PC-9 (cell line): ENCODE measurements at regions of chr3 and their contacts with region 1.

Region 1: GRCh38 chr3:136196401-136197158 is 445 bp upstream of the MSL2 start:
- DNase-seq: peak; percentile 97 to 100
- H3K4me3 ChIP-seq: peak overlapping the region; percentile 84
- H3K27ac ChIP-seq: peak overlapping the region; percentile 95
- H3K4me1 ChIP-seq: peaks cover 30% of the 10 kb centered on the region
- H3K27me3 ChIP-seq: no peaks in the 10 kb centered on the region
- CTCF ChIP-seq: no peak

Region 2: GRCh38 chr3:135197246-135197645 is 999.3 kb before region 1 on chr3:
- CTCF ChIA-PET with region 1: no interaction called
- POLR2A ChIA-PET with region 1: no interaction called
- intact Hi-C with region 1: no loop called
- DNase-seq: no peak
- H3K4me3 ChIP-seq: no peak overlapping the region
- H3K27ac ChIP-seq: no peak overlapping the region
- H3K4me1 ChIP-seq: no peaks in the 10 kb centered on the region
- H3K27me3 ChIP-seq: no peaks in the 10 kb centered on the region
- CTCF ChIP-seq: no peak

Region 3: DNA sequence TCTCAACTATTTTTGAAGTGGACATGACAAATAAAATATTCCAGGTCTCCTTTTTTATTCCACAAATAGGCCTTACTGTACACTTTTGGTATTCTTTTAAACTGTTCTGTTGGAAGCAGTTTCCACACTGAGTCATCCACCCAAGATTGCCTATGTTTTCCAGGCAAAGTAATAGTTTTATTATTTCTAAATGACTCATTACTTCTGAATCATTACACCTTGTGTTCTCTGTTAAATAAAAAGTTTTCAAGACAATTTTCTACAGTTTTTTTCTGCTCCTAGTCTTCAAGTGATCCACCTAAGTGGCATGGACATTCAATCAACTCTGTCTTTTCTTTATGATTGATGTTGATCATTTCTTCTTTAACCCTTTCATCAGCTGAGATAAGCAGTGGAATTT is 204.5 kb before region 1 on chr3:
- CTCF ChIA-PET with region 1: no interaction called
- POLR2A ChIA-PET with region 1: no interaction called
- intact Hi-C with region 1: no loop called
- DNase-seq: peak in 1 of 2 experiments; percentile 57
- H3K4me3 ChIP-seq: no peak overlapping the region
- H3K27ac ChIP-seq: 0 out of 2 replicates have a peak overlapping the region, but pooled peaks have one; percentile 4
- H3K4me1 ChIP-seq: peaks cover 16% of the 10 kb centered on the region
- H3K27me3 ChIP-seq: no peaks in the 10 kb centered on the region
- CTCF ChIP-seq: no peak

Region 4: DNA sequence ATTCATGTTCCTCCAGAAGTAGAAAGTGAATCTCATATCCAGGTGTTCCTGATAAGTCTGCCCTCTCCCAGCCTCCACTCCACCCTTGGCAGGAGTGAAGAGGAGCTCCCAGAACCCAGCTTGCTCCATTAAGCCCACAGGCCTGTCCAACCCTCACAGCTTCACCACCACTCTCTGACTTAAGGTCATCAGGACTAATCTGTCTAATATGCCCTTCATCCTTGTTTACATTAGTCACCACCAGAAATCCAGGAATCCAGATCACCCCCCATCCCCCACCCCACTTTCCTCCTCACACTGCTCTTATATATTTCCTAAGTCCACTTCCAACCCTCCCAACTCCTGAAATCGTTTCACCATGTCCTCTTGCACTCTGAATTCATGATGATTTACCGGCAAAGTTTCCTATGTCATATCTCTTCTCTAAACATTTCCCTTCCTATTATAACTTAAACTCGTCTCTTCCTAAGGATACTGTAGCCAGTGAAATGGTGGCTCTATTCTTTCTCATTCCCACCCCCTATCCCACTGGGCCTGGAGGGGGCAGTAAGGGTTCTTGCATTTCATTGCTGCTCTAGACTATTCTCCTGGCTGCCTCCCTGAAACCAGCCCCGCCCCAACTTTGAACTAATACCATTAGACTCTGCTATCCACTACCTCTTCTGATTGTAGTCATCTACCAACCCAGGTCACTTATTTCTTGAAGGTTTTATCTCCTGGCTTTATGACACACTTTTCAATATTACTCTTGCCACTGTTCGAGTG is 187.7 kb before region 1 on chr3:
- CTCF ChIA-PET with region 1: no interaction called
- POLR2A ChIA-PET with region 1: interaction called, 17 read pairs
- intact Hi-C with region 1: no loop called
- DNase-seq: peak; percentile 40 to 59
- H3K4me3 ChIP-seq: no peak overlapping the region
- H3K27ac ChIP-seq: peak overlapping the region; percentile 20; the same call in 1 of the 2 replicates
- H3K4me1 ChIP-seq: peaks cover 15% of the 10 kb centered on the region
- H3K27me3 ChIP-seq: no peaks in the 10 kb centered on the region
- CTCF ChIP-seq: no peak

Region 5: GRCh38 chr3:136149667-136150066 is 46.9 kb before region 1 on chr3:
- CTCF ChIA-PET with region 1: no interaction called
- POLR2A ChIA-PET with region 1: interaction called, 3 read pairs
- intact Hi-C with region 1: loop called (anchors 5 kb)
- DNase-seq: no peak
- H3K4me3 ChIP-seq: no peak overlapping the region
- H3K27ac ChIP-seq: no peak overlapping the region
- H3K4me1 ChIP-seq: no peaks in the 10 kb centered on the region
- H3K27me3 ChIP-seq: no peaks in the 10 kb centered on the region
- CTCF ChIP-seq: no peak

Region 6: DNA sequence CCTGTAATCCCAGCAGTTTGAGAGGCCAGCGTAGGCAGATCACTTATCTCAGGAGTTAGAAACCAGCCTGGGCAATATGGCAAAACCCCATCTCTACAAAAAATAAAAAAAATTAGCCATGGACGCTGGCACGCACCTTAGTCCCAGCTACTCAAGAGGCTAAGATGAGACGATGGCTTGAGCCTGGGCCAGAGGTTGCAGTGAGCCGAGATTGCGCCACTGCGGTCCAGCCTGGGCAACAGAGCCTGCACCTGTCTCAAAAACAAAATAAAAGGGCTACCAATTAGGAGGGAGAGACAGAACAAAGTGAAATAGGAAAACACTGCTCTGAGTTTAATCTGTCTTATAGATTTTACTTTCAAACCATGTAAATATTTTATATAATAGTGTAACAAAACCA is 34.3 kb before region 1 on chr3:
- CTCF ChIA-PET with region 1: no interaction called
- POLR2A ChIA-PET with region 1: no interaction called
- intact Hi-C with region 1: no loop called
- DNase-seq: no peak
- H3K4me3 ChIP-seq: no peak overlapping the region
- H3K27ac ChIP-seq: no peak overlapping the region
- H3K4me1 ChIP-seq: no peaks in the 10 kb centered on the region
- H3K27me3 ChIP-seq: no peaks in the 10 kb centered on the region
- CTCF ChIP-seq: no peak

Region 7: GRCh38 chr3:136291302-136291701 is 94.7 kb after region 1 on chr3:
- CTCF ChIA-PET with region 1: no interaction called
- POLR2A ChIA-PET with region 1: no interaction called
- intact Hi-C with region 1: no loop called
- DNase-seq: no peak
- H3K4me3 ChIP-seq: no peak overlapping the region
- H3K27ac ChIP-seq: no peak overlapping the region
- H3K4me1 ChIP-seq: no peaks in the 10 kb centered on the region
- H3K27me3 ChIP-seq: no peaks in the 10 kb centered on the region
- CTCF ChIP-seq: no peak

Region 8: DNA sequence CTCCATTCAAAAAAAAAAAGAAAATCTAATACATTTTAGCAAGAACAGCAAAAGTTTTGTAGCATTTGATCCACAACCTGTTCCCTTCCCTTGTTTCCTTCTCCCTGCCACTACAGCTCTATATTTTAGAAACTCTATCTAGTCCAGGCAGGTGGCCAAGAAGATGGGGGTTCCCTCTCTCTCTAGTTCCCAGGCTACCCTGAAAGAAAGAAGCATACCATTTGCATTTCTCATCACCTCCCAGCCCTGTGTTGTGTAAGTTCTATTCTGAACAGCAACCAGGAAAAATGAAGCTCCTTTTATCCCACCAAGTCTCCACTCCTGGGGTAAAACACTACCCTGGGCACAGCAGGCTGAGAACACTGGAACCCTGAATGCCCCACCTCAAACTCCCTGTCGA is 153.6 kb after region 1 on chr3:
- CTCF ChIA-PET with region 1: no interaction called
- POLR2A ChIA-PET with region 1: interaction called, 30 read pairs
- intact Hi-C with region 1: loop called (anchors 1 kb)
- DNase-seq: peak; percentile 71 to 77
- H3K4me3 ChIP-seq: no peak overlapping the region
- H3K27ac ChIP-seq: peak overlapping the region; percentile 74
- H3K4me1 ChIP-seq: peaks cover 14% of the 10 kb centered on the region
- H3K27me3 ChIP-seq: no peaks in the 10 kb centered on the region
- CTCF ChIP-seq: no peak